HEK293T (cell line): ENCODE measurements at regions of chr4 and their contacts with region 1.

Region 1: DNA sequence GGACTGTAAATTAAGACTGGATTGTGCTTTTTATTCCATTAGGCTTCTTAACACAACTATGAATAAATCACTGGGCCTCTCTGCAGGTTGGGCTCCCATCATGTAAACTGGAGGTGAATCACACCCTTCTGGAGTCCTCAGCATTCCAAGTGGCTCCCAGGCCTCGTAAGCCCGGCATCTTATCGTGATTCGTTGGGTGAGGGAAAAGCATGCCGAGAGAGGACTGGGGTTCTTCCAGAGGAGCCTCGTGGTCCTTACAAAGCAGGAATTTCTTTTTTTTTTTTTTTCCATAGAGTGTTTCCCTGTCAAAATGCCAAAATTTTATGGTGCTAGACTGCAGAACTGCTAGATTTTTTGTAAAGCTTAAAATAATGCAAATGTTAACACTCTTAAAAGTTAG is 20.0 kb downstream of the CLDN22 start:
- DNase-seq: no peak

Region 2: DNA sequence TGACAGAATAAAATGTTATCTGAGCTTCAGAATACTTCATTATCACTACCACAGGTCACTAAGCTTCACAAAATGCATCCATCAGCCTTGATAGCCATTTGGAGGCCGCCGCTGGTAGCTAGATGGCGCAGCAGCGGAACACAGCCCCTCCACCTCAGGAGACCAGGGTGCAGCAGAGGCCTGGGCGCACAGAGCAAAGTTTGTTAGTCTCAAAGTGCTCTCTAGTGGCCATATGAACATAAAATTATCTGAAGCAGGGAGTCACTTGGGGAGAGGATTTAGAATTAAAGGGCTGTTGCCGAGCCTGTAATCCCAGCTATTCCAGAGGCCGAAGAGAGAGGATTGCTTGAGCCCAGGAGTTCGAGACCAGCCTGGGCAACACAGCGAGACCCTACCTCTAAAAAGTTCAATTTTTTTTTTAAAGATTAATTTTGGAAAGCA is 374.8 kb before region 1 on chr4:
- CTCF ChIA-PET with region 1: interaction called, 10 read pairs
- POLR2A ChIA-PET with region 1: no interaction called
- DNase-seq: peak; percentile 63

Region 3: DNA sequence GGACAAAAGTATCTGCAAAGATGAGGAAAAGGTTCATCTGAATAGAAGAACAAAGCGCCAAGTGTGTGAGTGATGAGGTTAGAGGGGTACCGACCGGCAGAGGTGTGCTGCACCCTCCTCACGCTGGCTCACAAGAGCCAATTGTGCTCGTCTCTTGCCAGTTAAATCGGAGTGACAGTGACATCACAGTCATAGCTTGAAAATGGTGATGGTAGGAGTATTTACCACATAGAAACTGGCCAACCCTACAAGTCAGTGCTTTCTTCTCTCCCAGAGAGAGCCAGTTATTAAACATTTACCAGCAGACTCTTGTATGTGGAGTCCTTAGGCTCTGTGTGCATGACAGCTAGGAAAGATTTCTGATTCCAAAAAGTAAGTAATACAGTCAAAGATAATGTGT is 12.4 kb before region 1 on chr4:
- CTCF ChIA-PET with region 1: no interaction called
- POLR2A ChIA-PET with region 1: no interaction called
- DNase-seq: no peak

Region 4: GRCh38 chr4:183321079-183321478 is 21.0 kb after region 1 on chr4:
- CTCF ChIA-PET with region 1: no interaction called
- POLR2A ChIA-PET with region 1: no interaction called
- DNase-seq: no peak

Region 5: GRCh38 chr4:183342541-183343533 is 42.8 kb after region 1 on chr4:
- CTCF ChIA-PET with region 1: no interaction called
- POLR2A ChIA-PET with region 1: no interaction called
- DNase-seq: no peak

Region 6: GRCh38 chr4:183355405-183355804 is 55.3 kb after region 1 on chr4:
- CTCF ChIA-PET with region 1: no interaction called
- POLR2A ChIA-PET with region 1: no interaction called
- DNase-seq: no peak